PC-3 (cell line): ENCODE measurements at regions of chr15 and their contacts with region 1.

Region 1: DNA sequence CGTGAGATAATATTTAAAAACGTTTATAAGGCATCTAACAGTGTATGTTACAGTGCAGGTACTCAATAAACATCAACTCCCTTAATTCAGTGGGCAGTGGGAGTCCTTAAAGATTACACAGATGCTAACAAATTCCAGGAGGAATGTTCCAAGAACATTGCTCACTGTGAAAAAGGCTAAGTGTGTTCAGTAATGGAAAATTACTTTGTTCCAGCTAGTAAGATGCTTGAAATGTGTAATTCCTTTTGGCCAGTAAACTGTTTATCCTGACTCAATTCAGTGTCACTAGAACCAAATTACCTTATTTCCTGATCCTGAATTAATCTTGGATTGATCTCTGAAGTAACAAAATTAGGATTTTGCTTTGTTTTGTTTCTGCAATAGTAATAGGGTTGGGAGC is 54.2 kb upstream of the SEMA6D start:
- DNase-seq: peak; percentile 24
- ATAC-seq: peak; percentile 50
- H3K4me3 ChIP-seq: no peak overlapping the region
- H3K27ac ChIP-seq: peak overlapping the region; percentile 64
- H3K4me1 ChIP-seq: peaks cover 30% of the 10 kb centered on the region
- H3K27me3 ChIP-seq: no peaks in the 10 kb centered on the region
- CTCF ChIP-seq: no peak

Region 2: DNA sequence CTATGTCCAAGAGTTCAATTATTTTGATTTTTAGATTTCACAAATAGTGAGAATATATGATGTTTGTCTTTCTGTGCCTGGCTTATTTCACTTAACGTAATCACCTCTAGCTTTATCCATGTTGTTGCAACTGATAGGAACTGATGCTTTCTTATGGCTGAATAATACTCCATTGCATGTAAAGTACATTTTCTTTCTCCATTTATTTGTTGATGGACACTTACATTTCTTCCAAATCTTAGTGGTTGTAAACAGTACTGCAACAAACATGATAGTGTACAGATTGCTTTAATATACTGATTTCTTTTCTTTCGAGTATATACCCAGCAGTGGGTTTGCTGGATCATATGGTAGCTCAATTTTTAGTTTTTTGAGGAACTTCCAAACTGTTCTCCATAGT is 546.4 kb before region 1 on chr15:
- CTCF ChIA-PET with region 1: no interaction called
- POLR2A ChIA-PET with region 1: no interaction called
- intact Hi-C with region 1: no loop called
- DNase-seq: no peak
- ATAC-seq: no peak
- H3K4me3 ChIP-seq: no peak overlapping the region
- H3K27ac ChIP-seq: no peak overlapping the region
- H3K4me1 ChIP-seq: no peaks in the 10 kb centered on the region
- H3K27me3 ChIP-seq: no peaks in the 10 kb centered on the region
- CTCF ChIP-seq: no peak

Region 3: DNA sequence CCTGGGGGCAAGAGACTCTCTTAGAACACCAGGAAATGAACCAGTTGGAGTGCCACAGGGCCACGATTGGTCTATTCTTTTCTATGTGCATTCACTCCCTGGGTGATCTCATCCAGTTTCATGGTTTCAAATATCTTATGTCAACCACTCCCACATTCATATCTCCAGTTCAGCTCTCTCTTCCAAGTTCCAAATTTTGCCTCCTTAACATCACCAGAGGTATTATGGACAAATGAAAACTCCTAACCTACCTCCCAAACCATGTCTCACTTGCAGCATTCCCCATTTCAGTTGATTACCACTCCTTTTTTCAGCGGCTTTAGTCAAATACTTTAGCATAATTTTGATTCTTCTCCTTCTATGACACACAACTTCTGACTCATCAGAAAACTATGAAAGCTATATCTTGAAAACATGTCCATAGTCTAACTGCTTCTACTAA is 148.9 kb before region 1 on chr15:
- CTCF ChIA-PET with region 1: no interaction called
- POLR2A ChIA-PET with region 1: no interaction called
- intact Hi-C with region 1: no loop called
- DNase-seq: peak; percentile 79
- ATAC-seq: peak; percentile 71
- H3K4me3 ChIP-seq: peak overlapping the region; percentile 42; the same call in 1 of the 2 replicates
- H3K27ac ChIP-seq: peak overlapping the region; percentile 67
- H3K4me1 ChIP-seq: peaks cover 24% of the 10 kb centered on the region
- H3K27me3 ChIP-seq: no peaks in the 10 kb centered on the region
- CTCF ChIP-seq: no peak

Region 4: DNA sequence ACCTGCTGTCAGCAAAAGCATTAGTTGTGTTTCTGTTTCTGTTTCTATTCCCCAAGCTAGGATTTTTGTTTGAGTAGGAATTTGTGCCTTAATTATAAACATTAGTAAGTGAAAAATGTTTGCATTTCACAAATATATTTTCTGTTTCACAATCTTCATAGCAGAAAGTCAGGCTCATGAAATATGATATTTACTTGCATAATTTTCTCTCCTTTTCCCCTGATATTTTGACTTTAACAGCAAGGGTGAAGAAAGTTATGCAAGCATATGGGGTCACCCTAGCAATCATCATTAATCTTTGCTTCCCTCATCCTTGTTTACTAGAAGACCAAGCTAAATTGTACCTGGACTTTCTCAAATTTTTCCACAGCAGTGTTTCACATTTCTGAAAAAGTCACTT is 86.1 kb before region 1 on chr15:
- CTCF ChIA-PET with region 1: no interaction called
- POLR2A ChIA-PET with region 1: no interaction called
- intact Hi-C with region 1: loop called (anchors 10 kb)
- DNase-seq: no peak
- ATAC-seq: no peak
- H3K4me3 ChIP-seq: no peak overlapping the region
- H3K27ac ChIP-seq: no peak overlapping the region
- H3K4me1 ChIP-seq: peaks cover 28% of the 10 kb centered on the region
- H3K27me3 ChIP-seq: no peaks in the 10 kb centered on the region
- CTCF ChIP-seq: no peak

Region 5: GRCh38 chr15:47620965-47621685 is 42.0 kb before region 1 on chr15:
- CTCF ChIA-PET with region 1: no interaction called
- POLR2A ChIA-PET with region 1: no interaction called
- intact Hi-C with region 1: loop called (anchors 2 kb)
- DNase-seq: peak; percentile 88
- ATAC-seq: peak; percentile 94
- H3K4me3 ChIP-seq: peak overlapping the region; percentile 20; the same call in 1 of the 2 replicates
- H3K27ac ChIP-seq: peak overlapping the region; percentile 76
- H3K4me1 ChIP-seq: peaks cover 18% of the 10 kb centered on the region
- H3K27me3 ChIP-seq: no peaks in the 10 kb centered on the region
- CTCF ChIP-seq: 0 out of 2 replicates have a peak, but pooled peaks have one; percentile 9